ENCODE measurements at regions of chr3 and their contacts with region 1.

Region 1: DNA sequence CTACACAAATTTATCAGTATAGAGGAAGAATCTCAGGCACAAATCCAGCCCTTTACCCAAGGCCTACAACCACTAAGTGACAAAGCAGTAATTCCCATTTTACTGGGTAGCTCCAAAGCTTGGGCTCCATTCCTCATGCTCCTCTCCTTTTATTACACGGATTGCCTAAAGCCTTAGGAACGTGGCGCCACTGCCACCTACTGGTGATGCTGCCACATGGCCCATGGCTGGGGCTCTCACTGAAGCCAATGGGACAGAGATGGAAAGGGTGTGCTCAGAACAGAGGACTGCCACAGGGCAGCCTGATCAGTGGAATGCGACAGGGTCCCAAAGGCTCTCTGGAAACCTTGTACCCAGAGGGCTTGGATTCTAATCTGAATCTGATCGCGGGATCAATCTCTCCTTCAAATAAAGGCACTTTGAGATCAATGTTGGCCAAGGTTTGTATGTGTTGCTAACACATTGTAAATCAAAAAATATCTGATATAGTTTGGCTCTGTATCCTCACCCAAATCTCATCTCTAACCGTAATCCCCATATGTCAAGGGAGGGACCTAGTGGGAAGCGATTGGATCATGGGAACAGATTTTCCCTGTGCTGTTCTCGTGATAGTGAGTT is 33.5 kb upstream of the LYZL4 start:
- DNase-seq: peak; percentile 85
- H3K4me3 Mint-ChIP-seq: no peak overlapping the region
- H3K27ac Mint-ChIP-seq: no peak overlapping the region
- H3K4me1 Mint-ChIP-seq: no peaks in the 10 kb centered on the region
- H3K27me3 Mint-ChIP-seq: peaks cover 11% of the 10 kb centered on the region

Region 2: GRCh38 chr3:42118762-42119361 is 325.1 kb before region 1 on chr3:
- CTCF ChIA-PET with region 1: no interaction called
- POLR2A ChIA-PET with region 1: no interaction called
- intact Hi-C with region 1: loop called (anchors 10 kb)
- DNase-seq: peak; percentile 34
- H3K4me3 Mint-ChIP-seq: no peak overlapping the region
- H3K27ac Mint-ChIP-seq: no peak overlapping the region
- H3K4me1 Mint-ChIP-seq: peaks cover 13% of the 10 kb centered on the region
- H3K27me3 Mint-ChIP-seq: no peaks in the 10 kb centered on the region

Region 3: DNA sequence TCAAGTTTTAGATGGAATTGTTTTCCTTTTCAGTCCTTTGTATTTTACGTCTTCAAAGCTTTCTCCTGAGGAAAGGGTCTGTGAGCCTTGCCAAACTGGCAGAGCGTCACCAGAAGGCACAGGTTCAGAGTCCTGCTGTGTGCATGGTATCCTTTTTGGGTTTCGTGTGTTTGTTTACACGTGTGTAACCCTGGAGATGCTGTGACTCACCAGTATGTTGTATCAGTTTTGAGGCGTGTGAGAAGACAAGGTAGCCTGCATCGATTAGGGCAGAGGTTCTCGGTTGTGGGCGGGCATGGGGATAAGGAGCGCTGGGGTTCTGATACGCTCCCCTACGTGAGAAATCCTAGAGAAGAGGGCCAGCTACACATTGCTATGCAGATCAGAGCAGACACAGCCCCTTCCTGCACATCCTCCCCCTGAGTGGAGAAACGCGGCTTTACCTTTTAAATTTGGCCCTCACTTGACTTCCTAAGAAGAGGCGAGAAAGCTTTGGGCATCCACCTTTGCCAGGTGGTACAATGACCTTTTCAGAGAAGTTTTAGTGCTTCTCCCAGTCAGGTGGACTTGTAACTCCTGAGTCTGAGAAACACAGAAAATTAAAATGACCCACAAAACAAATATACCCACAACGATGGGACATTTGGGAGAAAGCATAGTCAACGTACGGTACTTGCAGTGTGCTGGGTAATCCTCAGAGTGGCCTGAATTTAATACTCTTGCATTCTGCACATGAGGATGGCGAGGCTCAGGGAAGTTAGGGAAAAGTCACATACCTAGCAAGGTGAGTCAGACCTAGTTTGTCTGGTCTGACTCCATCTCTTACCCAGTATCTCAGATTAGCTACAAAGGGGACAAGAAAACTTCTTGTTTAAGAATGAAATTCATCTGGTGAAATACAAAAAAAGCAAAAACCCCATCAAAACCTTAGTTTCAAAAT is 314.6 kb before region 1 on chr3:
- CTCF ChIA-PET with region 1: no interaction called
- POLR2A ChIA-PET with region 1: no interaction called
- intact Hi-C with region 1: no loop called
- DNase-seq: no peak
- H3K4me3 Mint-ChIP-seq: no peak overlapping the region
- H3K27ac Mint-ChIP-seq: no peak overlapping the region
- H3K4me1 Mint-ChIP-seq: no peaks in the 10 kb centered on the region
- H3K27me3 Mint-ChIP-seq: no peaks in the 10 kb centered on the region

Region 4: DNA sequence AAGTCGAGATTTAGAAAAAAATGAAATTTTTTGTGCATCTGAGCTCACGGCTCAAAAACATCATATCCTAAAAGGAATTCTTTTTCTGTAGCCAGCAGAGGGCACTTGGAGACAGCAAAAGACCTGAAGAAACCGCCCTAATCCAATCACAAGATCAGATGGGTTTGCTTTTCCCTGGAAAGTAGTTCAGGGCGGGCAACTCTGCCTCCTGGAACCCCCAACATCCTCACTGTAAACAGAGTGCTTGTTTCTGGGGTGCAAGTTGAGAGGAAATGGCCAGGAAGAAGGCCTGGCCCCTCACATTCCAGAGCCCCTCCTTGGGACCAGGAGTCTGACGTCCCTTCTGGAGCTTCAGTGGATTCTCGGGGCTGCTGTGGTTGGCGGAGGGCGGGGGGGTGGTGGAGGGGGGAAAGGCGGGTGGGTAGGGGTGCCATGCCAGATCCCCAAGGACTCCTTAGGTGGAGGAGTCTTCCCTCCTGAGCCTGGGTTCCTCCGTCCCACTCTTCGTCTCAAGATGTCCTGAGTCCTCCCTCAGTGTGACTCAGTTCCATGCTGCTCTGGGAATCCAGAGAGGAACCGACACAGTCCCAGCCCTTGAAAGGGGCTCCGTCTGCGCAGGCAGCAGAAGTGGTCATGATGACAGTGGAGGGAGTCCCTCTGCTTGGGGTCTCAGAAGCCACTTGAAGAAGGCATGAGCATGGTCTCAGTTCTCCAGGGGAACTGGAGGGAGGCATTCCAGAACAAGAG is 213.8 kb before region 1 on chr3:
- CTCF ChIA-PET with region 1: interaction called, 12 read pairs
- POLR2A ChIA-PET with region 1: no interaction called
- intact Hi-C with region 1: loop called (anchors 5 kb)
- DNase-seq: no peak
- H3K4me3 Mint-ChIP-seq: no peak overlapping the region
- H3K27ac Mint-ChIP-seq: no peak overlapping the region
- H3K4me1 Mint-ChIP-seq: no peaks in the 10 kb centered on the region
- H3K27me3 Mint-ChIP-seq: peaks cover 16% of the 10 kb centered on the region

Region 5: GRCh38 chr3:42247576-42248027 is 196.3 kb before region 1 on chr3:
- CTCF ChIA-PET with region 1: interaction called, 146 read pairs
- POLR2A ChIA-PET with region 1: no interaction called
- intact Hi-C with region 1: loop called (anchors 1 kb)
- DNase-seq: peak; percentile 73
- H3K4me3 Mint-ChIP-seq: no peak overlapping the region
- H3K27ac Mint-ChIP-seq: no peak overlapping the region
- H3K4me1 Mint-ChIP-seq: peaks cover 7% of the 10 kb centered on the region
- H3K27me3 Mint-ChIP-seq: peaks cover 9% of the 10 kb centered on the region

Region 6: GRCh38 chr3:42264399-42265058 is 179.4 kb before region 1 on chr3:
- CTCF ChIA-PET with region 1: interaction called, 11 read pairs
- POLR2A ChIA-PET with region 1: no interaction called
- intact Hi-C with region 1: no loop called
- DNase-seq: peak; percentile 38
- H3K4me3 Mint-ChIP-seq: no peak overlapping the region
- H3K27ac Mint-ChIP-seq: no peak overlapping the region
- H3K4me1 Mint-ChIP-seq: peaks cover 10% of the 10 kb centered on the region
- H3K27me3 Mint-ChIP-seq: peaks cover 62% of the 10 kb centered on the region

Region 7: GRCh38 chr3:42387802-42388651 is 55.9 kb before region 1 on chr3:
- CTCF ChIA-PET with region 1: interaction called, 5 read pairs
- POLR2A ChIA-PET with region 1: no interaction called
- intact Hi-C with region 1: loop called (anchors 5 kb)
- DNase-seq: peak; percentile 63
- H3K4me3 Mint-ChIP-seq: peak overlapping the region; percentile 31
- H3K27ac Mint-ChIP-seq: peak overlapping the region; percentile 91
- H3K4me1 Mint-ChIP-seq: peaks cover 22% of the 10 kb centered on the region
- H3K27me3 Mint-ChIP-seq: no peaks in the 10 kb centered on the region

Region 8: GRCh38 chr3:42946050-42946449 is 502.1 kb after region 1 on chr3:
- CTCF ChIA-PET with region 1: no interaction called
- POLR2A ChIA-PET with region 1: no interaction called
- intact Hi-C with region 1: no loop called
- DNase-seq: no peak
- H3K4me3 Mint-ChIP-seq: no peak overlapping the region
- H3K27ac Mint-ChIP-seq: no peak overlapping the region
- H3K4me1 Mint-ChIP-seq: peaks cover 5% of the 10 kb centered on the region
- H3K27me3 Mint-ChIP-seq: peaks cover 8% of the 10 kb centered on the region

Measured in activated CD4-positive, alpha-beta memory T cell treated with anti-CD3 and anti-CD28 coated beads for 36 hours (primary cell).